Heart right ventricle (tissue), 16 donors: ENCODE measurements at regions of chr9 and their contacts with region 1.

Region 1: DNA sequence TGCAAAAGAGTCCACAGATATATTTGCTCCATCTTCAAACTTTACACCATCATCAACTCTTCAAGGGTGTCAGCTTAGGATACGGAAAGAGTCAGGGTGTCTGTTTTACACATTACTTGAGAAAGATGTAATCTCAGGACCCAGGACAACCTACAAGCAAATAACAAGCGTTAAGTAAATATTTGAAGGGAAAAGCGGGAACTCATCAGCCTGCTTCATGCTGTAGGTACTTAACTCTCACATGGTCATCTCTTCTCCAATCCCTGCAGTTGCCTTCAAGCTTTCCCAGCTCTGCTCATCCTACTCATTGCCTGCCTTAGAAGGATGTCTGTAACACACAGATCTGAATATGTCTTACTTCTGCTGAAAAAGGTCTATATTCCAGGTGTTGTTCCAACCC is 292.1 kb upstream of the NR4A3 start:
- DNase-seq: no peak
- ATAC-seq: no peak
- H3K4me3 ChIP-seq: no peak overlapping the region
- H3K27ac ChIP-seq: no peak overlapping the region
- H3K4me1 ChIP-seq: no peaks in the 10 kb centered on the region
- H3K27me3 ChIP-seq: no peaks in the 10 kb centered on the region
- CTCF ChIP-seq: no peak

Region 2: GRCh38 chr9:99326112-99326916 is 203.3 kb before region 1 on chr9:
- intact Hi-C with region 1: no loop called
- DNase-seq: no peak
- ATAC-seq: no peak
- H3K4me3 ChIP-seq: no peak overlapping the region
- H3K27ac ChIP-seq: no peak overlapping the region
- H3K4me1 ChIP-seq: no peaks in the 10 kb centered on the region
- H3K27me3 ChIP-seq: peaks cover 0 to 3% (median 0%) of the 10 kb centered on the region in 7 donors
- CTCF ChIP-seq: no peak

Region 3: DNA sequence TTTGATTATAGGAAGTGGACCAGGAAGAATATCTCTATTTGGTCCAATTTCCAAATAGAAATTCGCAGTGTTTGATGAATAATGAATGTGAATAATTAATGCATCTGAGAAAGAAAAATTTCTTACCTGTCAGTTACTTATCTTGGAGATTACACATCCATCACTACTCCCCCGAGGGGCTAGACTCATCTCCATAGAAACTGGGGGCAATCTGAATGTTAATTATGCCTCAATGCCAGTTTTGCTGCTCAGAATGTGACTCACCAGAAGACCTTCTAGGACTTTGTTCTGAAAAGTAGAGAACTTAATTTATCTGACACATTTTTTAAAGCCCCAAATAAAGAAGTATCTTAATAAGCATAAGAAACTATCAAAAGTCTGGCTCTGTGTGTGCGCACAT is 58.7 kb after region 1 on chr9:
- intact Hi-C with region 1: loop called in 1 of 10 experiments (anchors 2 kb)
- DNase-seq: no peak
- ATAC-seq: no peak
- H3K4me3 ChIP-seq: no peak overlapping the region
- H3K27ac ChIP-seq: no peak overlapping the region
- H3K4me1 ChIP-seq: peaks cover 0 to 11% (median 0%) of the 10 kb centered on the region in 9 donors
- H3K27me3 ChIP-seq: no peaks in the 10 kb centered on the region
- CTCF ChIP-seq: no peak